Posterior vena cava (tissue), 2 donors: ENCODE measurements at regions of chr20 and their contacts with region 1.

Region 1: DNA sequence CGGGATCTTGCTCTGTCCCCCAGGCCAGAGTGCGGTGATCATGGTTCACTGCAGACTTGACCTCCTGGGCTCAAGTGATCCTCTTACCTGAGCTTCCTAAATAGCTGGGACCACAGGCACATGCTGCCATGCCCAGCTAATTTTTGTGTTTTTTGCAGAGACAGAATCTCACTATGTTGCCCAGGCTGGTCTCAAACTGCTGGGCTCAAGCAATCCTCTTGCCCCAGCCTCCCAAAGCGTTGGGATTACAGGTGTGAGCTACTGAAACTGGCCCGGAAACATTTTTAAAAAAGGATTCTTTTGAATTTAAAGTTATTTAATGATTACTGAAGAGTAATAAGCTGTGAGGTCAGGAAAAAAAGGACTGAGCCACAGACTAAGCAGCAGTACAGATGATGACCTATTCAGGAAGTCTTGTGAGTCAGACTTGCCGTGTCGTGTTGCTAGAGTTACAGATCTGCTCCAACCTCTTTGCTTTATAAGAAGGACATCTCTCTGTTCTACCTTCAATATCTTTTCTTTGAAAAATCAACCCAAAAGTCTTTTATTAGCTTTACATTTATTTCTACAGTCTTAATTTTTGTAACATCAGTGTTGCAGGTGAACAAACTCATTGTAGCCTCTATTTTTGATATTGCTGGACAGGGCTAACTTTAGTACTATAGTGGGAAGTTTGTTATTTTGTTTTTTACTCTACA is 108.7 kb downstream of the NCOA3 start:
- DNase-seq: peak; percentile 86

Region 2: GRCh38 chr20:47392015-47392720 is 218.2 kb before region 1 on chr20:
- intact Hi-C with region 1: loop called (anchors 5 to 10 kb)
- DNase-seq: no peak

Region 3: DNA sequence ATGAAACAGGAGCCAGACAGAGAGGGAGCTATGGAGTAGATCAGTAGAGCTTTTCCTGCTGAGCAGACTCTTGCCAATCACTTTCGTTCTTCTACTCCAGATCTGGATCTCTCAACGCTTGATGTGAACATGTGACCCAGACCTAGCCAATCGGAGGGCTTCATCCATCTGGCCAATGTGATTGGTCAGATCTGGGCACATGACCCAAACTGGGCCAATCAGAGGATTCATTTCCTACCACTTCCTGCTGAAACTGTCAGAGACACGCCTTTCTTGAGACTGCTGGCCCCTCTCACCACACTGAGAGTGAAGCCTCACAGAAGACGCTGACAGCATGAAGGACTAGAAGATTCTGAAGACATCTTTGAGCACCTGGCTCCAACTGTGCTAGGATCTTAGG is 209.7 kb before region 1 on chr20:
- intact Hi-C with region 1: loop called (anchors 5 to 10 kb)
- DNase-seq: no peak

Region 4: DNA sequence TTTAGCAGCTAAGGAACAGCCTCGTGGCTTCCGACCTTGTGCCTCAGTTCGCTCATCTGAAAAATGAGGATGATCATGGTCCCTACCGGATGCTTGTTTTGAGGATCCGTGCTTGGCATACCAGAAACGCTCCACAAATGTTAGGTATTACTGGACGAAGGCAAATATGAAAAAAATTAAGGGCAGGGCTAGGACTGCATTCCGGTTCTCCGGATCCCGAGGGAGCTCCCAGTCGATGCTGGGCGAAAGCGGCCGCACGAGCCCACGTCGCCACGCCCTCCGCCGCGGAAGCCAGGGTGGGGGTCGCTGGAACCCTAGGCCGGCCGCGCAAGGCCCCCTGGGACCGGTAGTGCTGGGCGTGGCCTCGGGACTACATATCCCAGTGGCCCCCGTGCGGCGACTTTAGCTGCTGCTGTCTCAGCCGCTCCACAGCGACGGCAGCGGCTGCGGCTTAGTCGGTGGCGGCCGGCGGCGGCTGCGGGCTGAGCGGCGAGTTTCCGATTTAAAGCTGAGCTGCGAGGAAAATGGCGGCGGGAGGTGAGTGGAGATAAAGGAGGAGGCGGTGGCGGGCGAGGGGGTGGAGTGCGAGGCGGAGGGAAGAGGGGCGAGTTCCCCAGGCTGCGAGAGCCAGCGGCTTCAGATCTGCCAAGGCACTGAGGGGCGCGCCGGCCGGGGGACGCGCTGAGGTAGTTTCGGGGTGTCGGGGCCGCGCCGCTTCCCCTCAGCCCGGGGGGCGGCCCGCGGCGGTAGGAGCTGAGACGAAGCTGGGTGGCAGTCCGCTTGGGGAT is 108.7 kb before region 1 on chr20 and contains the start of gene NCOA3:
- intact Hi-C with region 1: loop called in 1 of 2 experiments (anchors 10 kb)
- DNase-seq: peak; percentile 98
- total RNA-seq, gene NCOA3: 39.0 to 46.6 TPM